SK-N-SH (cell line): ENCODE measurements at regions of chr16 and their contacts with region 1.

Region 1: DNA sequence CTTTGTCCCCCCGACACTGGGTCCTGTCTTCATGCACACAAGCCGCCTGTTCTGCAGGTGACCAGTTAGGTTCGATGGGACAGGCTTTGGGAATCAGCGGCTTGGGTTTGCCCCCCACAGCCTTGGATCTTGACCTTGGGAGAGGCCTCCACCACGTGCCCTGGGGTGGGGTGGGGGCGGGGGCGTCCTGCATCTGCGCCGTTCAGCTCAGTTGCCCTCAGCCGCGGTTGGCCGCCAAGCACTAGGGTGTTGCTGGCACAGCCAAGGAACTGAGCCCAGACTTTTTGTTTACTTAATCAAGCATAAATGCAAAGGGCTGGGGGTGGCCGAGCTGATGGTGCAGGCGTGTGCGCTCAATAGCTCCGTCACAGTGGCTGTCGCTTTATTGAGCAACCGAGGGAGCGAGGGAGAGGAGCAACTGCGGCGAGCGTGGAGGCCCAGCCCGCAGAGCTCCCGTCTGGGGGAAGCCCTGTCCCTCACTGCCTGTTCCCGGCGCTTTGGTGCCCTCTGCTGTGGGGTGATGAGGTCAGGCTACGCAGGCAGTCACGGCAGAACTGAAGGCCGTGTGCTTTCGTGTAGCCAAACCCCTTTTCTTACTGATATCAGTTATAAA is 33.9 kb downstream of the JPH3 start:
- DNase-seq: peak; percentile 93
- H3K4me3 ChIP-seq: peak overlapping the region; percentile 35 to 50; a peak in 2 of 4 replicates
- H3K27ac ChIP-seq: no peak overlapping the region
- H3K4me1 ChIP-seq: peaks cover 0 to 15% of the 10 kb centered on the region in 2 experiments; a peak in 1 of 4 replicates
- H3K27me3 ChIP-seq: peaks cover 16% of the 10 kb centered on the region; the same call in 1 of the 2 replicates
- CTCF ChIP-seq: peak; percentile 67
- EP300 ChIP-seq: no peak
- RAD21 ChIP-seq: peak; percentile 83

Region 2: DNA sequence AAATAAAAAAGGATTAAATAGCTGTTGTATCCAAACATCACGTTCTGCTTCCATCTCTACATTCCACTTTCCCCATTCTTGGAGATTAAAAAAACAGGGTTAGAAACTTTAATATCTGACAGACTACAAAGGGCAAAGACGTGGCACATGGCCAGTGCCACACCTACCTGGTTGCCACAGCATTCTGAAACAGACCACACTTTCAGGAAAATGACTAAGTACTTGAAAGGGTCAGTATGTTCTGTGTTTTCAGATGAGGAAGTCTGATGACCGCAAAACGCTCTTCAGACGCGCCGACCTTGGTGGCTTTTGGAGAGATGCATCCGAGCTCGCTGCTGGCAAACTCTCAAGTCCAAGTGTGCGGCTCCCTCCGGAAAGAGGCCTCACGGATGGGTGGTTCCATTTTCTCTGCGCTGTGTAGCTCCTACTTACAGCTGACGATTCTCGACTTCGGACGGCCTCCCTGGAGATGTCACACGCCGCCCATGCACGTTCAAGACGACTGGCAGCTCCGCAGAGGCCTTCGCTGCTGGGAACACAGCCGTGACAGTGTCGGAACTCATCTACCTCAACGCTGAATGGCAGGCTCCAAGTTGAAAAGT is 228.6 kb before region 1 on chr16:
- CTCF ChIA-PET with region 1: interaction called, 13 read pairs
- POLR2A ChIA-PET with region 1: no interaction called
- DNase-seq: no peak
- H3K4me3 ChIP-seq: no peak overlapping the region
- H3K27ac ChIP-seq: no peak overlapping the region; a peak in 1 of 4 replicates
- H3K4me1 ChIP-seq: no peaks in the 10 kb centered on the region
- H3K27me3 ChIP-seq: no peaks in the 10 kb centered on the region
- CTCF ChIP-seq: no peak
- EP300 ChIP-seq: no peak
- RAD21 ChIP-seq: no peak

Region 3: GRCh38 chr16:87550496-87550961 is 85.6 kb before region 1 on chr16:
- CTCF ChIA-PET with region 1: interaction called, 20 read pairs
- POLR2A ChIA-PET with region 1: no interaction called
- DNase-seq: peak; percentile 86
- H3K4me3 ChIP-seq: no peak overlapping the region; a peak in 1 of 4 replicates
- H3K27ac ChIP-seq: no peak overlapping the region
- H3K4me1 ChIP-seq: no peaks in the 10 kb centered on the region; a peak in 1 of 4 replicates
- H3K27me3 ChIP-seq: 0 out of 2 replicates have a peak, but pooled peaks cover 6% of the 10 kb centered on the region
- CTCF ChIP-seq: peak; percentile 93
- EP300 ChIP-seq: no peak
- RAD21 ChIP-seq: peak; percentile 59

Region 4: DNA sequence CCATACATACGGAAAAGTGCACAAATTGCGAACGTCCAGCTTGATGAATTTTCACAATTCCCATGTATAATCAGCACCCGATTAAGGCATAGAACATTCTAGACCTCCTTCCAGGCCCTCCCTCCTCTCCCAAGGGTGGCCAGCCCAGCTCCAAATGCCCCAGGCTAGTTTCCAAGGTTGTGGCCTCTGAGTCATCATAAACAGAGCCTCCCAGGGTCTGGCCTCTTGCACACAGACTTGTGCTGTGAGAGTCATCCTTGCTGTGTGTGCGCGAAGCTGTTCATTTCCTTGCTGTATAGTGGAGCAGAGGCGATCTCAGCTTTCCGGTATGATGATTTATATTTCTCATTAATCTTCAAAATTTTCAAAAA is 54.4 kb before region 1 on chr16:
- CTCF ChIA-PET with region 1: interaction called, 229 read pairs
- POLR2A ChIA-PET with region 1: no interaction called
- DNase-seq: peak; percentile 58
- H3K4me3 ChIP-seq: peak overlapping the region in 1 of 2 experiments; percentile 50; a peak in 1 of 4 replicates
- H3K27ac ChIP-seq: peak overlapping the region; percentile 48 to 99; a peak in 3 of 4 replicates
- H3K4me1 ChIP-seq: peaks cover 14 to 19% of the 10 kb centered on the region in 2 experiments; a peak in 3 of 4 replicates
- H3K27me3 ChIP-seq: no peaks in the 10 kb centered on the region
- CTCF ChIP-seq: no peak
- EP300 ChIP-seq: peak in 1 of 2 experiments; percentile 75; a peak in 1 of 4 replicates
- RAD21 ChIP-seq: no peak

Region 5: GRCh38 chr16:87615621-87616041 is 20.5 kb before region 1 on chr16:
- CTCF ChIA-PET with region 1: interaction called, 37 read pairs
- POLR2A ChIA-PET with region 1: interaction called, 3 read pairs
- DNase-seq: no peak
- H3K4me3 ChIP-seq: no peak overlapping the region
- H3K27ac ChIP-seq: no peak overlapping the region
- H3K4me1 ChIP-seq: no peaks in the 10 kb centered on the region
- H3K27me3 ChIP-seq: peaks cover 9% of the 10 kb centered on the region
- CTCF ChIP-seq: no peak
- EP300 ChIP-seq: no peak
- RAD21 ChIP-seq: no peak

Region 6: GRCh38 chr16:87765776-87766484 is 129.8 kb after region 1 on chr16 and contains the start of gene KLHDC4:
- CTCF ChIA-PET with region 1: interaction called, 21 read pairs
- POLR2A ChIA-PET with region 1: no interaction called
- DNase-seq: peak; percentile 94
- H3K4me3 ChIP-seq: peak within 1 kb of the TSS; percentile 79 to 97
- H3K27ac ChIP-seq: peak within 1 kb of the TSS; percentile 66 to 78
- H3K4me1 ChIP-seq: peaks cover 4 to 5% of the 10 kb centered on the region in 2 experiments; a peak in 1 of 4 replicates
- H3K27me3 ChIP-seq: no peaks in the 10 kb centered on the region
- CTCF ChIP-seq: no peak
- EP300 ChIP-seq: no peak
- RAD21 ChIP-seq: no peak
- polyA plus RNA-seq, gene KLHDC4: 39.0 and 51.2 TPM in 2 replicates